ENCODE measurements at regions of chr5 and their contacts with region 1.

Region 1: DNA sequence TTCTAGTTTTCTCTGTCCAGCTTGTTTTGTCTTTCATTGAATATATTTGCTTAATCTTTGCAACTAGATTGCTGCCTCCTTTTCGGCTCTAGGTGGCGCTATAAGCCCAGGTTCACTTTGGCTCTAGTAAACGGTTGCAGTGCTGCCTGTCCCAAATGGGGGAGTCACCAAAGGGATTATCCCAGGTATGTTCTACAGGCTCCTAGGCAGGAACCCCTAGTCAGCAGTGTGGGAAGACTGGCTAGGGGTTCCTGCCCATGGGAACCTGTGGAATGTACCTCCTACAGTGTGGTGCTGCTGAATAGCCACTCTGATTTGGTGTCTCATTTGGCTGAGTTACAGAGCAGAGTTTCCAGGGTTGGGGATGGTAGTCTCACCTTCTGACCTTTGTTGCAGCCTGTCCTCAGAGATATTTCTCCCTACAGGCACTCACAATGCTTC is 85.2 kb downstream of the ARSB start:
- DNase-seq: peak; percentile 40
- CTCF ChIP-seq: peak; percentile 46

Region 2: GRCh38 chr5:78886341-78887230 is 13.4 kb before region 1 on chr5:
- CTCF ChIA-PET with region 1: interaction called, 32 read pairs
- POLR2A ChIA-PET with region 1: no interaction called
- DNase-seq: no peak
- CTCF ChIP-seq: peak; percentile 27

Region 3: GRCh38 chr5:78915170-78915569 is 15.2 kb after region 1 on chr5:
- CTCF ChIA-PET with region 1: interaction called, 23 read pairs
- POLR2A ChIA-PET with region 1: no interaction called
- DNase-seq: no peak
- CTCF ChIP-seq: no peak

Region 4: GRCh38 chr5:78920604-78921003 is 20.7 kb after region 1 on chr5:
- CTCF ChIA-PET with region 1: interaction called, 14 read pairs
- POLR2A ChIA-PET with region 1: no interaction called
- DNase-seq: no peak
- CTCF ChIP-seq: peak; percentile 45

Region 5: DNA sequence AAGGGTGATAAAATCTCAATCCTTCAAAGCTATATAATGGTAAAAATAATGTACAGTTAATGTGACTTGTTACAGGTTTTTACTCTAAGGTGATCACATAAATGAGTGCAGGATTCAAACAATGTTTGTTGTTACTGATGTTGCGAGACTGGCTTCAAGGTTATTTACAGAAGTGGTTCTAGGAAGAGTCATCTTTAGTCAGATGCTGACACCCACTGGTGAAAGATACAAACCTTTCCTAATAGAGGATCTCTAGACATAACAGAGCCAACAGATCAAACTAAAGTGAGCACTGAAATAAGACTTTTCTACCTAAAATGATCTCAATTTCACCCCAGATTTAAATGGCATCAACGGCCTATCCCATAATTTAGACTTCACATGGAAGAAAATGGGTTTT is 64.9 kb after region 1 on chr5:
- CTCF ChIA-PET with region 1: interaction called, 13 read pairs
- POLR2A ChIA-PET with region 1: no interaction called
- DNase-seq: peak; percentile 44
- CTCF ChIP-seq: peak; percentile 58